H1 (cell line): ENCODE measurements at regions of chr12 and their contacts with region 1.

Region 1: GRCh38 chr12:64801381-64801780 is 23.1 kb upstream of the TBC1D30 start:
- DNase-seq: no peak
- H3K4me3 ChIP-seq: no peak overlapping the region
- H3K27ac ChIP-seq: no peak overlapping the region
- H3K4me1 ChIP-seq: no peaks in the 10 kb centered on the region
- H3K27me3 ChIP-seq: no peaks in the 10 kb centered on the region
- CTCF ChIP-seq: peak in 2 of 3 experiments; percentile 44 to 89; a peak in 3 of 4 replicates
- EP300 ChIP-seq: no peak
- POLR2A ChIP-seq: no peak
- RAD21 ChIP-seq: peak; percentile 18 to 40; a peak in 3 of 4 replicates

Region 2: GRCh38 chr12:64714551-64714968 is 86.8 kb before region 1 on chr12:
- CTCF ChIA-PET with region 1: no interaction called
- POLR2A ChIA-PET with region 1: no interaction called
- DNase-seq: no peak
- H3K4me3 ChIP-seq: no peak overlapping the region
- H3K27ac ChIP-seq: no peak overlapping the region
- H3K4me1 ChIP-seq: no peaks in the 10 kb centered on the region
- H3K27me3 ChIP-seq: no peaks in the 10 kb centered on the region
- CTCF ChIP-seq: no peak
- EP300 ChIP-seq: no peak
- POLR2A ChIP-seq: no peak
- RAD21 ChIP-seq: no peak

Region 3: GRCh38 chr12:64814432-64814831 is 13.1 kb after region 1 on chr12:
- CTCF ChIA-PET with region 1: interaction called, 29 read pairs
- POLR2A ChIA-PET with region 1: interaction called, 3 read pairs
- DNase-seq: no peak
- H3K4me3 ChIP-seq: no peak overlapping the region
- H3K27ac ChIP-seq: no peak overlapping the region
- H3K4me1 ChIP-seq: no peaks in the 10 kb centered on the region
- H3K27me3 ChIP-seq: no peaks in the 10 kb centered on the region
- CTCF ChIP-seq: no peak
- EP300 ChIP-seq: no peak
- POLR2A ChIP-seq: no peak
- RAD21 ChIP-seq: no peak

Region 4: GRCh38 chr12:64836862-64837261 is 35.5 kb after region 1 on chr12:
- CTCF ChIA-PET with region 1: interaction called, 10 read pairs
- POLR2A ChIA-PET with region 1: no interaction called
- DNase-seq: no peak
- H3K4me3 ChIP-seq: no peak overlapping the region
- H3K27ac ChIP-seq: no peak overlapping the region
- H3K4me1 ChIP-seq: no peaks in the 10 kb centered on the region
- H3K27me3 ChIP-seq: no peaks in the 10 kb centered on the region
- CTCF ChIP-seq: no peak
- EP300 ChIP-seq: no peak
- POLR2A ChIP-seq: no peak
- RAD21 ChIP-seq: no peak

Region 5: GRCh38 chr12:64883596-64884542 is 82.5 kb after region 1 on chr12:
- CTCF ChIA-PET with region 1: interaction called, 24 read pairs
- POLR2A ChIA-PET with region 1: no interaction called
- DNase-seq: no peak
- H3K4me3 ChIP-seq: no peak overlapping the region
- H3K27ac ChIP-seq: no peak overlapping the region
- H3K4me1 ChIP-seq: no peaks in the 10 kb centered on the region
- H3K27me3 ChIP-seq: no peaks in the 10 kb centered on the region
- CTCF ChIP-seq: peak; percentile 10 to 41 (median 20); a peak in 3 of 4 replicates
- EP300 ChIP-seq: no peak
- POLR2A ChIP-seq: no peak
- RAD21 ChIP-seq: peak in 1 of 2 experiments; percentile 48; a peak in 3 of 4 replicates

Region 6: DNA sequence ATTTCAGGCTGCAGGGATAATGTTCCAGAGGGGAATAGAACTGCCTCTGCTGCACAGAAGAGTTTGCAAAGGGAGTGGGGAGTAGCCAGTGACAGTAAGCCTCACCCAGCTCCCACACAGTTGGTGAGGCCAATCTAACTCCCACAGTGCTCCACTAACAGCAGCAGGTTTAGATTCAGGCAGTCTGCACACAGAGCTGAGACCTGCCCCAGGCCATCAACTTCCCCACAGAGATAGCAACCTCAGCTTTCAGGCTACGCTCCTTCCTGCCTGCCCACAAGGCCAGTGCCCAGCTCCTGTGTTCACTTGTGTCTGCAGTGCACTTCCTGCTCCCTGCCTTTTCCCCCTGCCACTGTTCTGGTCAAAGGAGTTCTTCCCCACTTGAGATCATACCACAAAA is 130.6 kb after region 1 on chr12:
- CTCF ChIA-PET with region 1: no interaction called
- POLR2A ChIA-PET with region 1: no interaction called
- DNase-seq: no peak
- H3K4me3 ChIP-seq: no peak overlapping the region
- H3K27ac ChIP-seq: no peak overlapping the region
- H3K4me1 ChIP-seq: peaks cover 0 to 3% (median 0%) of the 10 kb centered on the region in 4 experiments; a peak in 2 of 7 replicates
- H3K27me3 ChIP-seq: no peaks in the 10 kb centered on the region; a peak in 1 of 7 replicates
- CTCF ChIP-seq: no peak
- EP300 ChIP-seq: no peak
- POLR2A ChIP-seq: no peak
- RAD21 ChIP-seq: no peak

Region 7: GRCh38 chr12:64991121-64991611 is 189.8 kb after region 1 on chr12:
- CTCF ChIA-PET with region 1: no interaction called
- POLR2A ChIA-PET with region 1: no interaction called
- DNase-seq: no peak
- H3K4me3 ChIP-seq: peak overlapping the region in 1 of 4 experiments; percentile 43; a peak in 1 of 8 replicates
- H3K27ac ChIP-seq: no peak overlapping the region
- H3K4me1 ChIP-seq: peaks cover 0 to 12% (median 10%) of the 10 kb centered on the region in 4 experiments; a peak in 4 of 7 replicates
- H3K27me3 ChIP-seq: no peaks in the 10 kb centered on the region
- CTCF ChIP-seq: no peak
- EP300 ChIP-seq: no peak
- POLR2A ChIP-seq: no peak
- RAD21 ChIP-seq: no peak

Region 8: DNA sequence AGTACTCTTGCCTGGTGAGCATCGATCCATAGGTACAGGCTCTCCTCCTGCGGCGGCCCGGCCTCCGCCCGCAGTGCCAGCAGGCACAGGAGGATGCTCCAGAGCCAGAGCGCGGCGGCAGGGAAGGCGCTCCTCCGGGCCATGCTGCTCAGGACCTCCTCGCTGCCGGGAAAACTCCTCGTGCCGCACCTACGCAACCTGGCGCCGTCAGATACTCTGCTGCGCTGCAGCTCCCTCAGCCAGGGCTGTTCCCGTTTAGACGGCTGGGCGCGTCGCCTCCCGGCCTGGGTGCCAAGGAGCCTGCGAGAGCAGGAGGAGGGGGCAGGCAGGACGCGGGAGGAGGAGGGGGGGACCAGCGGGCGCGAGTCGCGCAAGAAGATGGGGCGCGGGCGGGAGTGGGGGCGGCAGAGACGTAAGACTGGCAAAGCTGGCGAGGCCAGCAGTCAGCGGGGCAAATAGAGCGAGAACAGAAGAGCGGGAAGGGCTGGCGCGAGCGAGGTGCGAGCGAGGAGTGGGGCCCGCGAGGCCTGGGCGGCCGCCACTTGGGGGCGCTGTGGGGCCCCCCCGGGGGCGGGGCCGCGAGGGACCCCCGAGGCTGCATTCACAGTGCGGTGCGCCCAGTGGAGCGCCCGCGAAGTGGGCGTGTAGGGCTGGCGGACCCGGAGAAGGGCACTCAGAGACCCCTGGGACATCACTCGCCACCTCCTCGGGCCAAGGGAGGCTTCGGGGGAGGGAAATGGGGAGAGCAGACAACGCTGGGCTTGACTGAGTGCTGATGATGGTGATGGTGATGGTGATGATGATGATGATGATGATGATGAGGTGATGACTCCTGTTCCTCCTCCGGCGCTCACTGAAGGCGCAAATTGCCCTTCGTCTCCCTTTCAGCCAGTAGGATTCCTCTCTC is 319.9 kb after region 1 on chr12 and contains the start of gene WIF1:
- CTCF ChIA-PET with region 1: interaction called, 14 read pairs
- POLR2A ChIA-PET with region 1: no interaction called
- DNase-seq: peak; percentile 56 to 86
- H3K4me3 ChIP-seq: peak within 1 kb of the TSS; percentile 23 to 60 (median 42)
- H3K27ac ChIP-seq: no peak within 1 kb of the TSS
- H3K4me1 ChIP-seq: no peaks in the 10 kb centered on the region; a peak in 1 of 7 replicates
- H3K27me3 ChIP-seq: peaks cover 0 to 25% (median 18%) of the 10 kb centered on the region in 4 experiments; a peak in 6 of 7 replicates
- CTCF ChIP-seq: peak; percentile 60 to 68 (median 68)
- EP300 ChIP-seq: no peak
- POLR2A ChIP-seq: no peak
- RAD21 ChIP-seq: peak; percentile 7 to 12; a peak in 2 of 4 replicates
- total RNA-seq, gene WIF1: 7.8 and 9.1 TPM in 2 replicates